ENCODE measurements at regions of chr10 and their contacts with region 1.

Region 1: DNA sequence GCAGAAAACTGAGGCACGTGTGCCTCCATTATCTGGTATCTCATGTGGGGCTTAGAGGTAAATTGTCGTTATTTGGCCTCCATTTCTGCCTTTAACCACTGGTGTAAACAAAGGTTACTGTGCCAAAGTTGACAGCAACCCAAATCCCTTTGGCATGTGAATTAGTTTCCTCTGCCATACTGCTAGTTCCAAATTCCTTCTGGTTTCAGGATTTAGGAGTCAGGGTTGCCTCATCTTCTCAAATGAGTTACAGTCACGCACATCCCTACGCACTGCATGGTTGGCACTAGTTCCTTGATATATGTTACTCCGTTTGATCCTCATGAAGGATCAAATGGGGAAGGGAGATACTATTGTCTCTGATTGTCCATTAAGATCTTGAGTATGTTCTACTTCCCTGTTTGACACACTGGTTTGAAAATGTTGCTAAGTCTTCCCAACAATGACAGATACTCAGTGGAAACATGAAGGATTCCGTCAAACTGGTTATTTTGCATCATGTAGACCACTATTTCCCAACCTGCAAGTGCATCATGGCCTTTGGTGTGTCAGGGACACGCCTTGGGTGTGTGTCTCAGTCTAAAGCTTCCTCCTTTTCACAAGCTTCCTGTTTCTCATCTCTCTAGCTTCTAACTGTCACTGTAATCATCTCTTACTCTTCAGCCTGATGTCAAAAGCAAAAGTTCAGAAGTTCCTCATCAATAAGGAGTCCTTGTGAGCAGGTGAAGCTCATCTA is at the start of gene LIPN:
- DNase-seq: peak; percentile 98 to 99 (median 99)
- H3K4me3 ChIP-seq: peak within 1 kb of the TSS; percentile 38 to 74 (median 70)
- H3K4me3 Mint-ChIP-seq: peak within 1 kb of the TSS; percentile 66 to 93
- H3K27ac ChIP-seq: peak within 1 kb of the TSS; percentile 93 to 99
- H3K27ac Mint-ChIP-seq: peak within 1 kb of the TSS; percentile 99
- H3K4me1 ChIP-seq: peaks cover 18 to 41% of the 10 kb centered on the region in 2 donors
- H3K4me1 Mint-ChIP-seq: peaks cover 41% of the 10 kb centered on the region
- H3K27me3 ChIP-seq: no peaks in the 10 kb centered on the region
- H3K27me3 Mint-ChIP-seq: no peaks in the 10 kb centered on the region
- CTCF ChIP-seq: no peak
- polyA plus RNA-seq, gene LIPN: 8.9 to 12.9 (median 10.1) TPM

Region 2: DNA sequence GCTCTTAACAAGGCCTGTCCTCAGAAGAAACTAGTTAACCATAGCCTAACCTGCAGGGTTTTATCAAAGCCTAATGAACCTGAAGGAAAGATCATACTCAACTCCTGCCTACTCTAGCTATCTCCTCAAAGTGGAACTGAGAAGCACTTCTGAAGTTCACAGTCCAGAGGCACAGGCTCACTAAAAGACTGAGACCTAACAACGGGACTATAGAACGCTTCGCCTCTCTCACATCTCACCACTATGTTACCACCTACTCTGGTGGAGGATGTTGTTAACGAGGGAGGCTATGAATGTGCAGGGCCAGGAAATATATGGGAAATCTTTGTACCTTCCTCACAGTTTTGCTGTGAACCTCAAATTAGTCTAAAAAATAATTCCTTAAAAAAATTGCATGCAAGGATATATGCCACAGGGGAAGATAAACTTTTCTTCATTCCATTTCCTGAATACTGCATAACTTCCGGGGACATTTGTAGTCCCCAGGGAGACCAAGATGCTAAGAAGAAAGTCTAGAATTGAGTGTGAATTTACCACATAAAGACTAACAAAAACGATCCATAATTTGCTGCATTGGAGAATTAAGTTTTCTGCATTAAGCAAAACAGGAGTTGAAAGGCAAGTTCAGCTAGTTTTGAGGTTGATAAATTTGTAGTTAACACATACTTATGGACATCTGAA is 151.3 kb before region 1 on chr10:
- intact Hi-C with region 1: no loop called
- DNase-seq: no peak
- H3K4me3 ChIP-seq: no peak overlapping the region
- H3K4me3 Mint-ChIP-seq: no peak overlapping the region
- H3K27ac ChIP-seq: no peak overlapping the region
- H3K27ac Mint-ChIP-seq: no peak overlapping the region
- H3K4me1 ChIP-seq: no peaks in the 10 kb centered on the region
- H3K4me1 Mint-ChIP-seq: no peaks in the 10 kb centered on the region
- H3K27me3 ChIP-seq: no peaks in the 10 kb centered on the region
- H3K27me3 Mint-ChIP-seq: no peaks in the 10 kb centered on the region
- CTCF ChIP-seq: no peak

Region 3: GRCh38 chr10:88791924-88792323 is 32.4 kb after region 1 on chr10:
- intact Hi-C with region 1: loop called (anchors 2 to 5 kb)
- DNase-seq: peak; percentile 29 to 64 (median 42)
- H3K4me3 ChIP-seq: peak overlapping the region in 1 of 3 experiments; percentile 41
- H3K4me3 Mint-ChIP-seq: no peak overlapping the region
- H3K27ac ChIP-seq: peak overlapping the region; percentile 61 to 94
- H3K27ac Mint-ChIP-seq: peak overlapping the region; percentile 90 to 97 (median 94)
- H3K4me1 ChIP-seq: peaks cover 34 to 37% of the 10 kb centered on the region in 2 donors
- H3K4me1 Mint-ChIP-seq: peaks cover 39% of the 10 kb centered on the region
- H3K27me3 ChIP-seq: peaks cover 13 to 17% of the 10 kb centered on the region in 2 donors
- H3K27me3 Mint-ChIP-seq: peaks cover 16% of the 10 kb centered on the region in 3 donors
- CTCF ChIP-seq: peak; percentile 43

Measured in CD14-positive monocyte (primary cell).